CD4-positive, alpha-beta memory T cell (primary cell): ENCODE measurements at regions of chr7 and their contacts with region 1.

Region 1: GRCh38 chr7:16564909-16565426 is 38.3 kb downstream of the LRRC72 start:
- DNase-seq: peak in 4 of 5 donors; percentile 43 to 53 (median 51)
- H3K4me3 ChIP-seq: no peak overlapping the region
- H3K4me3 Mint-ChIP-seq: peak overlapping the region in 2 of 8 donors; percentile 57 to 67
- H3K27ac ChIP-seq: no peak overlapping the region
- H3K27ac Mint-ChIP-seq: peak overlapping the region in 1 of 7 donors; percentile 81
- H3K4me1 ChIP-seq: peaks cover 19% of the 10 kb centered on the region
- H3K4me1 Mint-ChIP-seq: peaks cover 8 to 17% (median 14%) of the 10 kb centered on the region in 4 donors
- H3K27me3 ChIP-seq: no peaks in the 10 kb centered on the region
- H3K27me3 Mint-ChIP-seq: peaks cover 3 to 5% of the 10 kb centered on the region in 2 donors

Region 2: DNA sequence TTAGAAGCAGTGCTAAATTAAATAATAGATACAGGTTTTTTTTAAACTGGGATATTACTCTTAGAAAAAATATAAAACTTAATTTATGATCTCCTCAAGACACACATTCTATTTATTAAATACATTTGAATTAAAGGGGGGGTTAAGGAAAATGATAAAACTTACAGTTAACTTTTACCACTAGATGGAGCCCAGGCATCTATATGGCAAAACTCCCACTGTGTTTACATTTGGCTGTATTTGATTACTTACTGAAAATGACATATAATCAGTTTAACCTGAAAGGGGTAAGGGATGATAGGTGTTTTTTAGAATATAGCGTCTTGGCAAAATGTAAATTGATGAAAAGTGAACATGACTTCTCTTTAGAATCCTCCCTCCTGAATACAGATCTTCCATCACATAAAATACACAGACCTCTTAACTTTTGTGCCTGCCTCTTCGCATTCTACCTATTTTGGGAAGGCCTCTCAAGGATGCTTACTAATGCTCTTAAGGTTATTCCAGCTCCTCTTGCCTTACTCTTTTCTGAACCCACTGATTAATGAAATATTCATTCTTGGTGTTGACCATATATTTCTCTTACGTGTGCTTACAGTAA is 1238.8 kb before region 1 on chr7:
- CTCF ChIA-PET with region 1: no interaction called
- POLR2A ChIA-PET with region 1: no interaction called
- intact Hi-C with region 1: loop called (anchors 5 kb)
- DNase-seq: no peak
- H3K4me3 ChIP-seq: no peak overlapping the region
- H3K4me3 Mint-ChIP-seq: no peak overlapping the region
- H3K27ac ChIP-seq: no peak overlapping the region
- H3K27ac Mint-ChIP-seq: no peak overlapping the region
- H3K4me1 ChIP-seq: no peaks in the 10 kb centered on the region
- H3K4me1 Mint-ChIP-seq: no peaks in the 10 kb centered on the region
- H3K27me3 ChIP-seq: no peaks in the 10 kb centered on the region
- H3K27me3 Mint-ChIP-seq: no peaks in the 10 kb centered on the region

Region 3: GRCh38 chr7:16114633-16115032 is 450.3 kb before region 1 on chr7:
- CTCF ChIA-PET with region 1: interaction called, 18 read pairs
- POLR2A ChIA-PET with region 1: no interaction called
- intact Hi-C with region 1: loop called (anchors 1 kb)
- DNase-seq: no peak
- H3K4me3 ChIP-seq: no peak overlapping the region
- H3K4me3 Mint-ChIP-seq: no peak overlapping the region
- H3K27ac ChIP-seq: no peak overlapping the region
- H3K27ac Mint-ChIP-seq: no peak overlapping the region
- H3K4me1 ChIP-seq: no peaks in the 10 kb centered on the region
- H3K4me1 Mint-ChIP-seq: peaks cover 0 to 8% (median 5%) of the 10 kb centered on the region in 4 donors
- H3K27me3 ChIP-seq: no peaks in the 10 kb centered on the region
- H3K27me3 Mint-ChIP-seq: no peaks in the 10 kb centered on the region

Region 4: DNA sequence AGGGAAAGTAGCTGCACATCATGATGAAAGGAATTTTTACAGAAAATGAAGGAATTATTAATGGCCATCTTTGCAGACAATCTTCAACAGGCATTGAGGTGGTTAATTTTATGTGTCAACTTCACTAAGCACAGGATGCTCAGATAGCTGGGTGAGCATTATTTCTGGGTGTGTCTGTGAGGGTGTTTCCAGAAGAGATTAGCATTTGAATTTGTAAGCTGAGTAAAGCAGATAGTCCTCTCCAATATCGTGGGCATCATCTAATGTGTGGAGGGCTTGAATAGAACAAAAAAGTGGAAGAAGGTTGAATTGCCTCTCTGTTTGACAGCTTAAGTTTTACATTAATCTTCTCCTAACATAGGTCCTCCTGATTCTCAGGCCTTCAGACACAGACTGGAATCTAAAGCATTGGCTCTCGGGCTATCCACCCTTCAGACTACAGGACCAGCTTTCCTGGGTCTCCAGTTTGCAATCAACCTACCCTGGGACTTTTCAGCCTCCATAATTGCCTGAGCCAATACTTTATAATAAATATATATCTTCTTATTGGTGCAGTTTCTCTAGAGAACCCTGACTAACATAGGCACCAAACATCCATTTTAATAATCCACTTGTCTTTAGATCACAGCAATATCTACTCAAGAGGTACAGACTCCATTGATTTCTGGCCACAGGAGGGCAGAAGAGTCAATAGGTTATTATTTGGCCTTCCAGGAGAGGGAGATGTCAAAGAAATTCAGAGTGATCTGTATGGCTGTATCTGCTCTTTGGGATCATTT is 133.1 kb before region 1 on chr7:
- CTCF ChIA-PET with region 1: interaction called, 98 read pairs
- POLR2A ChIA-PET with region 1: no interaction called
- intact Hi-C with region 1: loop called (anchors 1 kb)
- DNase-seq: peak in 4 of 5 donors; percentile 26 to 40 (median 34)
- H3K4me3 ChIP-seq: no peak overlapping the region
- H3K4me3 Mint-ChIP-seq: no peak overlapping the region
- H3K27ac ChIP-seq: no peak overlapping the region
- H3K27ac Mint-ChIP-seq: no peak overlapping the region
- H3K4me1 ChIP-seq: no peaks in the 10 kb centered on the region
- H3K4me1 Mint-ChIP-seq: peaks cover 0 to 6% (median under 1%) of the 10 kb centered on the region in 4 donors
- H3K27me3 ChIP-seq: no peaks in the 10 kb centered on the region
- H3K27me3 Mint-ChIP-seq: peaks cover 5% of the 10 kb centered on the region in 2 donors

Region 5: GRCh38 chr7:16586081-16586874 is 21.3 kb after region 1 on chr7:
- CTCF ChIA-PET with region 1: interaction called, 10 read pairs
- POLR2A ChIA-PET with region 1: no interaction called
- intact Hi-C with region 1: no loop called
- DNase-seq: no peak
- H3K4me3 ChIP-seq: no peak overlapping the region
- H3K4me3 Mint-ChIP-seq: no peak overlapping the region
- H3K27ac ChIP-seq: no peak overlapping the region
- H3K27ac Mint-ChIP-seq: peak overlapping the region in 1 of 7 donors; percentile 11
- H3K4me1 ChIP-seq: no peaks in the 10 kb centered on the region
- H3K4me1 Mint-ChIP-seq: no peaks in the 10 kb centered on the region
- H3K27me3 ChIP-seq: no peaks in the 10 kb centered on the region
- H3K27me3 Mint-ChIP-seq: peaks cover 1 to 10% of the 10 kb centered on the region in 2 donors